ENCODE measurements at regions of chr9 and their contacts with region 1.

Region 1: GRCh38 chr9:137223078-137223970 is 1.3 kb upstream of the RNF208 start:
- DNase-seq: peak; percentile 96
- H3K4me3 ChIP-seq: peak overlapping the region; percentile 65 to 74 (median 67)
- H3K27ac ChIP-seq: peak overlapping the region; percentile 59
- H3K4me1 ChIP-seq: peaks cover 58% of the 10 kb centered on the region
- H3K27me3 ChIP-seq: no peaks in the 10 kb centered on the region
- CTCF ChIP-seq: no peak

Region 2: GRCh38 chr9:137046098-137046787 is 177.1 kb before region 1 on chr9 and contains the start of gene NPDC1:
- CTCF ChIA-PET with region 1: no interaction called
- dilution Hi-C with region 1: no loop called
- in situ Hi-C with region 1: no loop called
- intact Hi-C with region 1: loop called (anchors 5 kb)
- DNase-seq: peak; percentile 73
- H3K4me3 ChIP-seq: peak within 1 kb of the TSS; percentile 52 to 62 (median 59)
- H3K27ac ChIP-seq: no peak within 1 kb of the TSS
- H3K4me1 ChIP-seq: peaks cover 27% of the 10 kb centered on the region
- H3K27me3 ChIP-seq: no peaks in the 10 kb centered on the region
- CTCF ChIP-seq: peak; percentile 82 to 90
- total RNA-seq, gene NPDC1: 15.5 to 86.8 TPM

Region 3: DNA sequence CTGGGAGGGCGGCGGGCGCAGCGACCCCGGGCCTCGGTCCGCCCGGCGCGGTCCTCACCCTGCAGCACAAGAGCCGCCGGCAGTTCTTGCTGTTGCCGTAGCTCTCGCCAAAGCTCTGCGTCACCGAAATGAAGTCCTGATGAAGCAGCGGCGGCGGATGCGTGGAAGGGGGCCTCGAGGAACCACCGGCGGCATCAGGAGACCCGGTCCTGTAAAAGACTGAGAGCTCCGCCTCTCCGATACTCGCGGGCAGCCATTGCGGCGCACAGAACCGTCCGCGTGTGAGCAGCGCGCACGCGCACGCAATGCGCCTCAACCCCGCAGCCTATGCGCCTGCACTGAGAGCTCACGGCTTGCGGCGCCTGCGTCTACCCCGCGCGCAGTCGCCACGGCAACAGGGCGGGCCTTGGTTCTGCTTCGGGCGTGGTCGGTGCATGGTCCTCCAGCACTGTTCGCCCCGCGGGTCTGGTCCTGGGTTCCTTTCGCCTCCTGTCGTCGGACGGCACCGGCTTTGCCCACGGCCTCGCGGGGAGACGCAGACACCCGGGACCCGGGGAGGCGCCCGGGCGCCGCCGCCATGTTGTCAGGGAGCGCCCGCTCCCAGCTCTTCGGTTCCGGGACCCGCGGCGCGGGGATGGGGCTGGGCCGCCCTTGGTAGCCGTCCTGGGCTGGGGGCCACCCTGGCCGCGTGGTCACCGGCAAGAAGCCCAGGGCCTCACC is 93.7 kb before region 1 on chr9:
- CTCF ChIA-PET with region 1: no interaction called
- dilution Hi-C with region 1: no loop called
- in situ Hi-C with region 1: loop called in 1 of 2 experiments (anchors 10 kb)
- intact Hi-C with region 1: no loop called
- DNase-seq: peak; percentile 89
- H3K4me3 ChIP-seq: peak overlapping the region; percentile 64 to 83 (median 81)
- H3K27ac ChIP-seq: peak overlapping the region; percentile 53
- H3K4me1 ChIP-seq: peaks cover 14% of the 10 kb centered on the region
- H3K27me3 ChIP-seq: no peaks in the 10 kb centered on the region
- CTCF ChIP-seq: no peak

Region 4: DNA sequence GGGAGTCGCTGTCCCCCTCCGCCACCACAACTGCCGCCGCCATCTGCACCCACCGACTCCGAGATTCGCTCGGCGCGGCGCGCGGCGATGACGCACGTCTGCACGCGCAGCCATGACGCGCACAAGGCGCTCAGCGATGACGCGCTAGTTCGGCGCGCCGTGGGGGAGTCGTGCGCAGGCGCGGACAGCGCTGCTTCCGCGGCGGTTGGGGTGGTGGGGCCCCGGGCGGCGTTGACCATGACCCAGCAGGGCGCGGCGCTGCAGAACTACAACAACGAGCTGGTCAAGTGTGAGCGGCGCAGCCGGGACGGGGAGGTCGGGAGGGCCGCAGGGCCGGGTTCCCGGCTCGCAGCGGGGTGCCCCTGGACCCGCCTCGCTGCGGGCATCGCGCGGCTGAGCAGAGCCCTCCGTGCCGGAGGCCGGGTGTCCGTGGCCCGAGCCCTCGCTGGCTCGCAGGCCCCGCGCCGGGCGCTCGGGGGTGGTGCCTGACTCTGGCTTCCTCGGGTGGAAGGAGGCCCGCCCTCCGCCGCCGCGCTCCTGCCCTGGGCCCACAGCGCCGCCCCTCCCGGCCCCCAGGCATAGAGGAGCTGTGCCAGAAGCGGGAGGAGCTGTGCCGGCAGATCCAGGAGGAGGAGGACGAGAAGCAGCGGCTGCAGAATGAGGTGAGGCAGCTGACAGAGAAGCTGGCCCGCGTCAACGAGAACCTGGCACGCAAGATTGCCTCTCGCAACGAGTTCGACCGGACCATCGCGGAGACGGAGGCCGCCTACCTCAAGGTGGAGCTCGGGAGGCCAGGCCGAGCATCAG is 34.6 kb before region 1 on chr9 and contains the starts of genes ANAPC2 and SSNA1:
- CTCF ChIA-PET with region 1: interaction called, 18 read pairs
- dilution Hi-C with region 1: no loop called
- in situ Hi-C with region 1: loop called in 1 of 2 experiments (anchors 5 kb)
- intact Hi-C with region 1: loop called (anchors 1 kb)
- DNase-seq: peak; percentile 91
- H3K4me3 ChIP-seq: peak within 1 kb of the TSS; percentile 87 to 98 (median 92)
- H3K27ac ChIP-seq: peak within 1 kb of the TSS; percentile 71
- H3K4me1 ChIP-seq: peaks cover 28% of the 10 kb centered on the region
- H3K27me3 ChIP-seq: no peaks in the 10 kb centered on the region
- CTCF ChIP-seq: peak in 1 of 2 donors; percentile 60
- total RNA-seq, gene ANAPC2: 15.5 to 45.3 TPM
- total RNA-seq, gene SSNA1: 36.2 to 70.2 TPM

Region 5: GRCh38 chr9:137236238-137236935 is 13.1 kb after region 1 on chr9:
- CTCF ChIA-PET with region 1: interaction called, 12 read pairs
- dilution Hi-C with region 1: no loop called
- in situ Hi-C with region 1: no loop called
- intact Hi-C with region 1: no loop called
- DNase-seq: peak; percentile 55
- H3K4me3 ChIP-seq: no peak overlapping the region
- H3K27ac ChIP-seq: no peak overlapping the region
- H3K4me1 ChIP-seq: peaks cover 27% of the 10 kb centered on the region
- H3K27me3 ChIP-seq: no peaks in the 10 kb centered on the region
- CTCF ChIP-seq: peak; percentile 91 to 95

Measured in mammary epithelial cell (primary cell).